CD8-positive, alpha-beta memory T cell (primary cell): ENCODE measurements at regions of chr2 and their contacts with region 1.

Region 1: GRCh38 chr2:25276569-25277465 is 64.9 kb downstream of the DNMT3A start:
- DNase-seq: peak; percentile 72 to 86 (median 76)
- H3K4me3 ChIP-seq: peak overlapping the region; percentile 41
- H3K4me3 Mint-ChIP-seq: peak overlapping the region; percentile 69 to 89 (median 78)
- H3K27ac ChIP-seq: peak overlapping the region; percentile 63
- H3K27ac Mint-ChIP-seq: peak overlapping the region; percentile 94 to 100 (median 96)
- H3K4me1 ChIP-seq: peaks cover 74% of the 10 kb centered on the region
- H3K4me1 Mint-ChIP-seq: peaks cover 50 to 80% (median 59%) of the 10 kb centered on the region in 3 donors
- H3K27me3 ChIP-seq: no peaks in the 10 kb centered on the region
- H3K27me3 Mint-ChIP-seq: peaks cover 0 to 2% of the 10 kb centered on the region in 2 donors

Region 2: DNA sequence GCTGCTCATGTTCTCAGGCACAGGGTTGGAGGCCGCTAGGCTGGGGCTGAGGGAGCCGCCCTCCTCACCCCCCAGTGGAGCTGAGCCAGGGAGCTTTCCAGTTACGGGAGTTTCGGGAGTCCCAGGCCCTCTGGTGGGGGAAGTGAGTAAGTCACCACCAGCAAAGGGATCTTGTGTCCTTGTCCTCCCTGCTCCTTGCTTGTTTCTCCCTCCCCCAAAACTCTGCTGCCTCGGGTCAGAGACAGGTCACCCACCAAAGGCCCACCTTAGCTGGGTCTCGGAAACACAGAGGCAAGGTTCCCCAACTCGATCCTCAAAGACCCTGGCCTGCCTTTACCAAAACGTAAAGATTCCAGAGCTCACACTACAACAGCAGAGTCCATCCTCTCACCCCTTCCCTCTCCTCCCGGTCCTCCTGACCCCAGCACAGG is 48.0 kb before region 1 on chr2:
- CTCF ChIA-PET with region 1: interaction called, 10 read pairs
- POLR2A ChIA-PET with region 1: no interaction called
- DNase-seq: peak in 1 of 5 donors; percentile 29
- H3K4me3 ChIP-seq: no peak overlapping the region
- H3K4me3 Mint-ChIP-seq: peak overlapping the region in 1 of 7 donors; percentile 19
- H3K27ac ChIP-seq: no peak overlapping the region
- H3K27ac Mint-ChIP-seq: peak overlapping the region in 4 of 8 donors; percentile 26 to 98 (median 53)
- H3K4me1 ChIP-seq: peaks cover 7% of the 10 kb centered on the region
- H3K4me1 Mint-ChIP-seq: peaks cover 0 to 13% (median 4%) of the 10 kb centered on the region in 3 donors
- H3K27me3 ChIP-seq: no peaks in the 10 kb centered on the region
- H3K27me3 Mint-ChIP-seq: no peaks in the 10 kb centered on the region

Region 3: GRCh38 chr2:25252281-25253105 is 24.3 kb before region 1 on chr2:
- CTCF ChIA-PET with region 1: interaction called, 22 read pairs
- POLR2A ChIA-PET with region 1: interaction called, 20 read pairs
- DNase-seq: peak; percentile 32 to 76 (median 54)
- H3K4me3 ChIP-seq: peak overlapping the region; percentile 26
- H3K4me3 Mint-ChIP-seq: peak overlapping the region; percentile 75 to 91 (median 85)
- H3K27ac ChIP-seq: no peak overlapping the region
- H3K27ac Mint-ChIP-seq: peak overlapping the region; percentile 45 to 83 (median 68)
- H3K4me1 ChIP-seq: peaks cover 17% of the 10 kb centered on the region
- H3K4me1 Mint-ChIP-seq: peaks cover 30 to 43% (median 37%) of the 10 kb centered on the region in 3 donors
- H3K27me3 ChIP-seq: no peaks in the 10 kb centered on the region
- H3K27me3 Mint-ChIP-seq: peaks cover 0 to 4% of the 10 kb centered on the region in 2 donors

Region 4: DNA sequence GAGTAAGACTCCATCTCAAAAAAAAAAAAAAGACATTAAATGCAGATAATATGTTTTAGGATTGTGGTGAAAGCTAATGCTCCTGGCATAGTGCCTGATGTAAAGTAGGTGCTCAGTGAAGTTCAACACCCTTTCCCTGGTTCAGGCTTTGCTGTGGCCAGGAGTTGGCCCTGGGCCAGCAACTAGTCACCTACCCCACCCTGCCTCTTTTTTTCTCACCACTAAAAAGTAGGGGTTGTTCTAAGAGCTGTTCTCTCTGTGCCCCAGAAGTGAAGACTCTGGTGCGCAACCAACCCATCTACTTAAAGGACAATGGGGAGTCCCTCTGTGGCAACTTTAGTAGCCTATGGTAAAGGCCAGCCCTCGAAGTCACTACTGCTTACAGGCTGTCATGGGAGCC is 11.0 kb before region 1 on chr2:
- CTCF ChIA-PET with region 1: interaction called, 29 read pairs
- POLR2A ChIA-PET with region 1: interaction called, 4 read pairs
- DNase-seq: peak in 2 of 5 donors; percentile 46 to 70
- H3K4me3 ChIP-seq: no peak overlapping the region
- H3K4me3 Mint-ChIP-seq: peak overlapping the region in 4 of 7 donors; percentile 6 to 63 (median 30)
- H3K27ac ChIP-seq: no peak overlapping the region
- H3K27ac Mint-ChIP-seq: peak overlapping the region in 7 of 8 donors; percentile 26 to 83 (median 61)
- H3K4me1 ChIP-seq: peaks cover 25% of the 10 kb centered on the region
- H3K4me1 Mint-ChIP-seq: peaks cover 32 to 59% (median 50%) of the 10 kb centered on the region in 3 donors
- H3K27me3 ChIP-seq: no peaks in the 10 kb centered on the region
- H3K27me3 Mint-ChIP-seq: no peaks in the 10 kb centered on the region

Region 5: GRCh38 chr2:25294573-25295462 is 18.0 kb after region 1 on chr2:
- CTCF ChIA-PET with region 1: interaction called, 66 read pairs
- POLR2A ChIA-PET with region 1: interaction called, 16 read pairs
- DNase-seq: peak; percentile 68 to 88 (median 79)
- H3K4me3 ChIP-seq: peak overlapping the region; percentile 12
- H3K4me3 Mint-ChIP-seq: peak overlapping the region; percentile 24 to 81 (median 76)
- H3K27ac ChIP-seq: peak overlapping the region; percentile 70
- H3K27ac Mint-ChIP-seq: peak overlapping the region; percentile 88 to 98 (median 94)
- H3K4me1 ChIP-seq: peaks cover 62% of the 10 kb centered on the region
- H3K4me1 Mint-ChIP-seq: peaks cover 39 to 47% (median 41%) of the 10 kb centered on the region in 3 donors
- H3K27me3 ChIP-seq: no peaks in the 10 kb centered on the region
- H3K27me3 Mint-ChIP-seq: no peaks in the 10 kb centered on the region

Region 6: GRCh38 chr2:25309402-25309801 is 32.6 kb after region 1 on chr2:
- CTCF ChIA-PET with region 1: interaction called, 29 read pairs
- POLR2A ChIA-PET with region 1: interaction called, 6 read pairs
- DNase-seq: peak; percentile 40 to 75 (median 45)
- H3K4me3 ChIP-seq: no peak overlapping the region
- H3K4me3 Mint-ChIP-seq: peak overlapping the region in 2 of 7 donors; percentile 59 to 61
- H3K27ac ChIP-seq: no peak overlapping the region
- H3K27ac Mint-ChIP-seq: peak overlapping the region; percentile 11 to 99 (median 74)
- H3K4me1 ChIP-seq: peaks cover 78% of the 10 kb centered on the region
- H3K4me1 Mint-ChIP-seq: peaks cover 72 to 94% (median 75%) of the 10 kb centered on the region in 3 donors
- H3K27me3 ChIP-seq: no peaks in the 10 kb centered on the region
- H3K27me3 Mint-ChIP-seq: no peaks in the 10 kb centered on the region

Region 7: GRCh38 chr2:25314514-25315315 is 37.9 kb after region 1 on chr2:
- CTCF ChIA-PET with region 1: interaction called, 29 read pairs
- POLR2A ChIA-PET with region 1: interaction called, 6 read pairs
- DNase-seq: peak; percentile 50 to 76 (median 58)
- H3K4me3 ChIP-seq: peak overlapping the region; percentile 74
- H3K4me3 Mint-ChIP-seq: peak overlapping the region; percentile 76 to 87 (median 79)
- H3K27ac ChIP-seq: peak overlapping the region; percentile 44
- H3K27ac Mint-ChIP-seq: peak overlapping the region; percentile 86 to 95 (median 90)
- H3K4me1 ChIP-seq: peaks cover 64% of the 10 kb centered on the region
- H3K4me1 Mint-ChIP-seq: peaks cover 49 to 74% (median 51%) of the 10 kb centered on the region in 3 donors
- H3K27me3 ChIP-seq: no peaks in the 10 kb centered on the region
- H3K27me3 Mint-ChIP-seq: no peaks in the 10 kb centered on the region